Endothelial cell of umbilical vein (primary cell): ENCODE measurements at regions of chr5 and their contacts with region 1.

Region 1: DNA sequence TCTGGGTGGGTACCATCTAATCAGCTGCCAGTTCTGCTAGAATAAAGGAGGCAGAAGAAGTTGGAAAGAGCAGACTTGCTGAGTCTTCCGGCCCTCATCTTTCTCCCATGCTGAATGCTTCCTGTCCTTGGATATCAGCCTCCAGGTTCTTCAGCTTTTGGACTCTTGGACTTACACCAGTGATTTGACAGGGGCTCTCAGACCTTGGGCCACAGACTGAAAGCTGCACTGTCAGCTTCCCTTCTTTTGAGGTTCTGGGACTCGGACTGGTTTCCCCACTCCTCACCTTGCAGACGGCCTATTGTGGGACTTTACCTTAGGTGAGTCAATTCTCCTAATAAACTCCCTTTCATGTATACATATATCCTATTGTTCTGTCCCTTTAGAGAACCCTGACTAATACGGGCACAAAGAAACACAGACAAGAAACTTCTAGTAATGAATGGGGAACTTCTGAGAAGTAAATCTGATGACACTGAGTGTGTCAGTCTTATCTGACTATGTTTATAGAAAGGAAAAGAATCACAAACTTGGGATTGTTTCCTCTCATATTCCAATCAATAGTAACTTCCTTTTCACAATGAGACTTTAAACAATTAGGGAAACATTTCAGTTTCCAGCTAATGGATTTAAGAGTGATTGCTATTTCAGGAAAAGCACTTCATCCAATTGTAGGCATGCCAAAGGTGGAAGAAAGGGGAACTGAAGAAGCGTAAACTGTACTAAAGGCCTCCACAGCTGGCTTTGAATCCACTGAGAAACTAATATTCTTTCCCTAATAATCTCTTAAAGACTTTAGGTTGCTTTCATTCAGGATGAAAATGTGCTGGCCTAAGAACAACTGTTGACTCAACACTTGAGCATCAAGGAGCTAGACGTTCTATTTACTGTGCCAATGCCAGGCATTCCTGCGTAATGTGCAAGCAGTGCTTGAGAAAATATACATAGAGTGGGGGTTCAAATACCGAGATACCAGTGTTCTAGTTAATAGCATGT is 127.9 kb upstream of the PTGER4 start:
- DNase-seq: peak; percentile 81
- H3K4me3 ChIP-seq: peak overlapping the region in 2 of 3 experiments; percentile 8 to 17
- H3K27ac ChIP-seq: peak overlapping the region; percentile 92
- H3K4me1 ChIP-seq: peaks cover 25% of the 10 kb centered on the region
- H3K27me3 ChIP-seq: no peaks in the 10 kb centered on the region
- CTCF ChIP-seq: no peak
- POLR2A ChIP-seq: peak; percentile 30

Region 2: DNA sequence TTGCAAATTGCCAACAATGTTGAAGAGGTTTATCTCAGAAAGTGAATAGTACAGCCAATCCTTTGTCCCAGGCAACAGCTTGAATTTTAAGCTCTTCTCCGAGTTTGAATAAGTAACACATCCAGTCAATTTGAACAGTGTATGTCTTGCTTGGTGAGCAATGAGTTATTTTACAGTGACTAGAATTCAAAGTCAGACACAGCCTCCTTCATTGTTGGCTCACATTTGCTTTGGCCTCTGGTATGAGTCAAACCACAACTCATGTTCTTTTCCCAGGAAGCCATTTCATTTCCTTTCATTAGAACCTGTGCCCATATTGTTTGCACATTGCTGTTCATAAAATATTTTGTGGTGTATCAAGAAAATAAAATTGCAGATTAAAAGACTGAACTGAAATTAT is 505.0 kb before region 1 on chr5:
- CTCF ChIA-PET with region 1: no interaction called
- POLR2A ChIA-PET with region 1: no interaction called
- dilution Hi-C with region 1: no loop called
- intact Hi-C with region 1: loop called (anchors 10 kb)
- DNase-seq: peak; percentile 89
- H3K4me3 ChIP-seq: no peak overlapping the region
- H3K27ac ChIP-seq: peak overlapping the region; percentile 57
- H3K4me1 ChIP-seq: peaks cover 34% of the 10 kb centered on the region
- H3K27me3 ChIP-seq: no peaks in the 10 kb centered on the region
- CTCF ChIP-seq: no peak
- POLR2A ChIP-seq: no peak

Region 3: GRCh38 chr5:40570408-40571129 is 18.8 kb after region 1 on chr5:
- CTCF ChIA-PET with region 1: interaction called, 3 read pairs
- POLR2A ChIA-PET with region 1: no interaction called
- dilution Hi-C with region 1: no loop called
- intact Hi-C with region 1: loop called (anchors 1 kb)
- DNase-seq: peak; percentile 73
- H3K4me3 ChIP-seq: no peak overlapping the region
- H3K27ac ChIP-seq: peak overlapping the region; percentile 72
- H3K4me1 ChIP-seq: peaks cover 18% of the 10 kb centered on the region
- H3K27me3 ChIP-seq: no peaks in the 10 kb centered on the region
- CTCF ChIP-seq: no peak
- POLR2A ChIP-seq: no peak